ENCODE measurements at regions of chr6 and their contacts with region 1.

Region 1: DNA sequence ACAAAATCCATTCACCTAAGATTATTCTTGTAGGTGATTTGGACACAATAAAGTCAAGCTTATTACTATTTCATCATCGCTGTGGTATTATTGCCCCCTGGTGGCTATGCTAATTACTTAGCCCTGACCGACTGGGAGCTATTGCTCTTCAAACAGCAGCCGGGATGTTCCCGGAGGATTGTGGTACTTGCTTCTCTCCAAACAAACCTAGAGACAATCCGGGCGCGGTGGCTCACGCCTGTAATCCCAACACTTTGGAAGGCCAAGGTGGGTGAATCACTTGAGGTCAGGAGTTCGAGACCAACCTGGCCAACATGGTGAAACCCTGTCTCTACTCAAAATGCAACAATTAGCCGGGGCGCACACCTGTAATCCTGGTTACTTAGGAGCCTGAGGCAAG is 15.4 kb upstream of the STMND1 start:
- DNase-seq: peak; percentile 46
- H3K4me3 Mint-ChIP-seq: no peak overlapping the region
- H3K27ac Mint-ChIP-seq: no peak overlapping the region
- H3K4me1 Mint-ChIP-seq: no peaks in the 10 kb centered on the region
- H3K27me3 Mint-ChIP-seq: peaks cover 8% of the 10 kb centered on the region

Region 2: GRCh38 chr6:16292942-16293341 is 793.5 kb before region 1 on chr6:
- CTCF ChIA-PET with region 1: no interaction called
- intact Hi-C with region 1: loop called (anchors 10 kb)
- DNase-seq: no peak
- H3K4me3 Mint-ChIP-seq: no peak overlapping the region
- H3K27ac Mint-ChIP-seq: no peak overlapping the region
- H3K4me1 Mint-ChIP-seq: no peaks in the 10 kb centered on the region
- H3K27me3 Mint-ChIP-seq: no peaks in the 10 kb centered on the region

Measured in activated naive CD4-positive, alpha-beta T cell treated with anti-CD3 and anti-CD28 coated beads for 36 hours (primary cell).